GM10248 (cell line): ENCODE measurements at regions of chr2 and their contacts with region 1.

Region 1: GRCh38 chr2:233331536-233331935 is 22.8 kb upstream of the DGKD start:
- DNase-seq: peak; percentile 66
- CTCF ChIP-seq: no peak

Region 2: GRCh38 chr2:233321166-233321565 is 10.4 kb before region 1 on chr2:
- CTCF ChIA-PET with region 1: interaction called, 11 read pairs
- POLR2A ChIA-PET with region 1: interaction called, 4 read pairs
- DNase-seq: no peak
- CTCF ChIP-seq: no peak

Region 3: DNA sequence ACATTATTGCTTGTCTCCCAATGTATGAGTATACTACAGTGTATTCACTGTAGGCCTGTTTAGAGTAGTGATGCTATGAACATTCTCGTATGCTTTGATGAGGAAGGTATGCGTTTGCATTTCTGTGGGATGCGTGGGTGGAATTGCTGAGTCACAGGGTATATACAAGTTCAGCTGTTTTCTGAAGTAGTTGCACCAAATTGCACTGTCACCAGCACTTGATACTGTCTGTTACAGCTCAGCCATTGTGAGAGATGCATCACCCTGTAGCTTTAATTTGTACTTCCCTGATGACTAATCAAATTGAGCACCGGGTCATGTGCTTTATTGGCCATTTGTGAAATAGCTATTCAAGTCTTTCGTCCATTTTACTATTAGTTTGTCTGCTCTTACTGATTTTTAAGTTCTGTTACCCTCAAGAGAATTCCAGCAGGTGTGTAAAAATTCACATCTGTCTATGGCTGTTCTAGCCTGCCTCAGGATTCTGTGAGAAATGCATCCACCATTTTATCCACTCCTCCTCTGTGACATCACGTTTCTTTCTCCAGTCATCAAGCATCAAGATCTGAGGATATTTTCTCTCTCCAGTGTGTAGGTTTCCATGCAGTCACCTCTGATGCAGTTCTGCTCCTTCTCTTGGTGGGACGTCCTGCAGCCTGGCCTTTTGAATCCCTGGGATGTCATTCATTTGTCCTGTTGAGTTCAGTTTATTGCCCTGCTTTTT is 95.2 kb after region 1 on chr2:
- CTCF ChIA-PET with region 1: no interaction called
- POLR2A ChIA-PET with region 1: no interaction called
- DNase-seq: no peak
- CTCF ChIP-seq: no peak